Esophagus muscularis mucosa (tissue), 4 donors: ENCODE measurements at regions of chr7 and their contacts with region 1.

Region 1: DNA sequence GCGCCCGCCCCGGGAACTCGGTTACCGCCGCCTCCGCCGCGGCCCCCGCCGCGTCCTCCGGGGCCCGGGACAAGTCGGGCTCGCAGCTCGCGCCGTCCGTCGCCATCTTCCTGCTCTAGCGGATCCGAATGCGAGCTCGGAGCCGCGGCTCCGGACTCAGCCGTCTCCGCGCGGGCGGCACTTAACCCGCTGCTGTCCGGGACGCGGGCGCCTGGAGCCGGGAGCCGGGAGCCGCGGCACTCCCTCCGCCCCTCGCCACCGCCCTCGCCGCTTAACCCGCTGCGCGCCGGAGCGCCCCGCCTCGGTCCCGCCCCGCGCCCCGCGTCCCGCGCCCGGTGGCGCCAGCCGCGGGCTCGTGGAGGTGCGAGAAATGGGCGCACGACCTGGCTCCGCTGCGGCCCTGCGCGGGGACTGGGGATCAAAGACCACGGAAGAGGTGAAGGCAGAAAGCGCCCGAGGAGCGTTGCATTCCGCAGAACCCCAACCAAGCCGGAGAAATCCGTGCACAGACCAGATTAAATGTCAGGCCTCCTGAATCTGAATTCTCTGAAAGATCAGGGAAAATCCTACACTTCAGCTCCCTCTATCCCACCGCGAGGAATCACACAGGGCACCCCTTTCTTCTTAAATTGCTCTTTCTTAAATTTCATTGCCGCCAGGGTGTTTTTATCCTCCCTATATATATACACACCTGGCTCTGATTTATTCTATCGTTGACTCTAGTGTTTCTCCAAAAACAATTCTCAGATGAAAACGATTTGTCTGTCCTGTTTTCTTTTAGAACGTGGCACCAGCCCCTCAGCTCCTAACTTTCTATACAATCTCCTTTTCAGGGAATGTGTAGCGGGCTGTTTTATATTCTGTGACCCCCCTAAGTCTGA is at the start of gene CTTNBP2:
- DNase-seq: no peak
- H3K4me3 ChIP-seq: peak within 1 kb of the TSS; percentile 73 to 98 (median 91)
- H3K27ac ChIP-seq: peak within 1 kb of the TSS; percentile 86 to 89 (median 86)
- H3K4me1 ChIP-seq: peaks cover 7 to 49% (median 39%) of the 10 kb centered on the region in 4 donors
- H3K27me3 ChIP-seq: no peaks in the 10 kb centered on the region
- CTCF ChIP-seq: peak in 1 of 3 experiments; percentile 22
- EP300 ChIP-seq: no peak
- POLR2A ChIP-seq: no peak
- total RNA-seq, gene CTTNBP2: 11.6 to 23.7 (median 13.7) TPM

Region 2: GRCh38 chr7:118183786-118184564 is 310.4 kb after region 1 on chr7 and contains the start of gene LSM8:
- intact Hi-C with region 1: loop called (anchors 10 kb)
- DNase-seq: peak; percentile 99
- H3K4me3 ChIP-seq: peak within 1 kb of the TSS; percentile 84 to 97 (median 91)
- H3K27ac ChIP-seq: peak within 1 kb of the TSS; percentile 92 to 96 (median 95)
- H3K4me1 ChIP-seq: peaks cover 24 to 33% (median 31%) of the 10 kb centered on the region in 4 donors
- H3K27me3 ChIP-seq: no peaks in the 10 kb centered on the region
- CTCF ChIP-seq: no peak
- EP300 ChIP-seq: no peak
- POLR2A ChIP-seq: peak; percentile 48
- total RNA-seq, gene LSM8: 22.1 to 28.1 (median 26.3) TPM